Dorsolateral prefrontal cortex (tissue), 120 donors: ENCODE measurements at regions of chr22 and their contacts with region 1.

Region 1: GRCh38 chr22:36277482-36278291 is 24.8 kb downstream of the APOL1 start:
- DNase-seq: peak in 6 of 10 donors; percentile 50 to 66 (median 56)
- H3K4me3 ChIP-seq: peak overlapping the region in 24 of 59 donors; percentile 5 to 47 (median 30)
- H3K27ac ChIP-seq: peak overlapping the region in 1 of 59 donors; percentile 21
- H3K27me3 ChIP-seq: no peaks in the 10 kb centered on the region
- CTCF ChIP-seq: peak; percentile 48 to 92 (median 81)

Region 2: DNA sequence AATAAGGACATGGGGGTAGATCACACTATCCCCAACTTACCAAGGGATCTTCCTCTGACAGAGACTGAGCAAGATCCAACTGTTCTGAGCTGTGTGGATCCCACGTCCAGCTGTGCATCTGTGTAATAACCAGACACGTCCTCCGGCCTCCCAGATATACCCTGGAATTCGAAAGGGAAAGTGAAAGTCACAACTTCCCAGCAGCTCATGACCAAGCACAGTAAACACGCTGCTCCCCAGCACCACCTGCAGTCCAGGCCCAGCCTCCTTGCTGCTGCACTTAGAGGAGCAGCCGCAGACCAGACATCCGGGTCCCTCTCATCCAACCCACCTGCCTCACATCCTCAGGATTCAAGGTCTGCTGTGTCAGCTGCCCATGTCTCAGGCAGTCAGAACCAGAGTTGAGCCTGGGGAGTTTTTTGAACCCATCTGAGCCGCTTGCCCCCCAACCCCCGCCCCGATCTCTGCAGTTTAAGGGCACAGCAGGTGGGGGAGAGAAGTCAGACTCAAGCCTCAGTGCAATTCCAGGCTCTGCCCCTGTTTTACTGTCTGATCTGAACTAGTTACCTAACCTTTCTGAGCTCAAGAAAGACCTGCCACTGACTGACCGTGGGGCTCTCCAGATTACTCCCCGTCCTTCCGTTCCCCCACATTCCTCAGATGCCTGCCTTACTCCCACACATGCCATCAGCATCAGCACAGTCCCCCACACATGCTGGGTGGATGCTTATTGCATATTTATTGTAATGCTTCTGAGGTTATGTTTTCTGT is 38.1 kb before region 1 on chr22 and contains the start of gene APOL2:
- intact Hi-C with region 1: loop called (anchors 2 to 5 kb)
- DNase-seq: peak; percentile 77 to 96 (median 90)
- H3K4me3 ChIP-seq: peak within 1 kb of the TSS; percentile 49 to 84 (median 72)
- H3K27ac ChIP-seq: peak within 1 kb of the TSS; percentile 71 to 95 (median 89)
- H3K27me3 ChIP-seq: no peaks in the 10 kb centered on the region
- CTCF ChIP-seq: peak; percentile 48 to 90 (median 79)
- total RNA-seq, gene APOL2: 41.2 to 167 (median 101) TPM